H1 (cell line): ENCODE measurements at regions of chr5 and their contacts with region 1.

Region 1: DNA sequence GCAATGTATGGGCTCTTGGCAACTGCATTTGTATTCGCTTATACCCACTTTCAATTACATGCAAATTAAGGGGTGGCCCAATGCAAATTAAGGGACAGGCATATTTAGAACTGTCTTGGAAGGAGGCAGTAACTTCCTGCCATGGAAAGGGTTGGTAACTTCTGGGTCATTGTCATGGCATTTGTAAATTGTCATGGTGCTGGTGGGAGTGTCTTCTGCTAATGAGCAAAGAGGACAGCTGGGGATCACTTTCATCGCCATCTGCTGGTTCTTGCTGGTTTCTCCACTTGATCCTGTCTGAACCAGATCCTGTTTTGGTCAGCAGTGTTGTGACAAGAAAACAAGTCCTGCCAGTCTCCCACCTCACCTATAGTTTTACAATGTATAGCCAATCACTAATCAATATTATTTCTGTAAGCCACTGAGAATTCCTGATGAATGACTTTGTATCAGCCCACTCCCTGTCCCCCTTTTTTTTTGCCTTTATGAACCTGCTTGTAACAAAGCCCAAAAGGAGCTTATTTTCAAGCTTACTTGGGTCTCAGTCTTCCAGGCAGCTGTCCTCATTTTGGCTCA is 23.4 kb upstream of the UGT3A2 start:
- DNase-seq: peak; percentile 33 to 60
- H3K4me3 ChIP-seq: no peak overlapping the region
- H3K27ac ChIP-seq: no peak overlapping the region
- H3K4me1 ChIP-seq: peaks cover 0 to 5% (median 2%) of the 10 kb centered on the region in 4 experiments; a peak in 2 of 7 replicates
- H3K27me3 ChIP-seq: no peaks in the 10 kb centered on the region
- CTCF ChIP-seq: peak; percentile 28 to 75 (median 53)
- EP300 ChIP-seq: peak in 1 of 2 experiments; percentile 10; a peak in 1 of 3 replicates
- POLR2A ChIP-seq: no peak
- RAD21 ChIP-seq: peak; percentile 34 to 45

Region 2: DNA sequence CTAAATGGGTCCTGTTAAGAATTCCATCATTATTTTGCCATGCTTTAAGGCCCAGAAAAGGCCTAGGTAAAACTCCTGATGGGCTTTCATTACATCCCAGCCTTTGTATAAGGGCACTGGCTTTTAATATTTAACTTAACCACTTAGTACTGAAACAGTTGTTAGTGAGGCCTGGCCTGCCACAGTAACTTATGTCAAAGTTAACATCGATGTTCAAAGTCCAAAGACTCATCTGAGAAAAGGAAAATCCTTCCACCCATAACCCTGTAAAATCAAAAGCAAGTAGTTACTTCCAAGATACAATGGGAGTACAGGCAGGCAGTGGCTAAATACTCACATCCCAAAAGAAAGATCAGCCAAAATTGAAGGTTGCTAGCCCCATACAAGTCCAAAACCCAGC is 83.9 kb before region 1 on chr5:
- CTCF ChIA-PET with region 1: no interaction called
- POLR2A ChIA-PET with region 1: no interaction called
- DNase-seq: no peak
- H3K4me3 ChIP-seq: no peak overlapping the region
- H3K27ac ChIP-seq: no peak overlapping the region
- H3K4me1 ChIP-seq: no peaks in the 10 kb centered on the region
- H3K27me3 ChIP-seq: no peaks in the 10 kb centered on the region
- CTCF ChIP-seq: no peak
- EP300 ChIP-seq: no peak
- POLR2A ChIP-seq: no peak
- RAD21 ChIP-seq: no peak

Region 3: GRCh38 chr5:36073595-36074216 is 16.4 kb before region 1 on chr5:
- CTCF ChIA-PET with region 1: interaction called, 55 read pairs
- POLR2A ChIA-PET with region 1: interaction called, 3 read pairs
- DNase-seq: peak; percentile 44 to 51
- H3K4me3 ChIP-seq: no peak overlapping the region
- H3K27ac ChIP-seq: no peak overlapping the region
- H3K4me1 ChIP-seq: peaks cover 0 to 4% (median 1%) of the 10 kb centered on the region in 4 experiments; a peak in 2 of 7 replicates
- H3K27me3 ChIP-seq: no peaks in the 10 kb centered on the region; a peak in 1 of 7 replicates
- CTCF ChIP-seq: peak in 2 of 3 experiments; percentile 60 to 78; a peak in 3 of 4 replicates
- EP300 ChIP-seq: no peak
- POLR2A ChIP-seq: no peak
- RAD21 ChIP-seq: peak; percentile 77 to 80

Region 4: GRCh38 chr5:36105819-36106218 is 15.7 kb after region 1 on chr5:
- CTCF ChIA-PET with region 1: no interaction called
- POLR2A ChIA-PET with region 1: no interaction called
- DNase-seq: no peak
- H3K4me3 ChIP-seq: no peak overlapping the region
- H3K27ac ChIP-seq: no peak overlapping the region
- H3K4me1 ChIP-seq: no peaks in the 10 kb centered on the region; a peak in 1 of 7 replicates
- H3K27me3 ChIP-seq: no peaks in the 10 kb centered on the region
- CTCF ChIP-seq: no peak
- EP300 ChIP-seq: no peak
- POLR2A ChIP-seq: no peak
- RAD21 ChIP-seq: no peak